K562 (cell line): ENCODE measurements at regions of chr18 and their contacts with region 1.

Region 1: GRCh38 chr18:11937874-11938478 is 29.9 kb upstream of the MPPE1 start:
- DNase-seq: peak; percentile 61 to 82 (median 64)
- ATAC-seq: peak; percentile 83
- H3K4me3 ChIP-seq: no peak overlapping the region
- H3K27ac ChIP-seq: no peak overlapping the region
- H3K4me1 ChIP-seq: no peaks in the 10 kb centered on the region
- H3K27me3 ChIP-seq: peaks cover 0 to 6% of the 10 kb centered on the region in 2 experiments; a peak in 2 of 5 replicates
- CTCF ChIP-seq: peak; percentile 77 to 89 (median 80)
- EP300 ChIP-seq: no peak
- POLR2A ChIP-seq: no peak
- RAD21 ChIP-seq: peak; percentile 81 to 96

Region 2: GRCh38 chr18:11995445-11996189 is 57.6 kb after region 1 on chr18:
- CTCF ChIA-PET with region 1: interaction called, 30 read pairs
- POLR2A ChIA-PET with region 1: interaction called, 4 read pairs
- in situ Hi-C with region 1: loop called (anchors 5 kb)
- intact Hi-C with region 1: loop called (anchors 1 kb)
- DNase-seq: peak; percentile 65 to 83 (median 72)
- ATAC-seq: peak; percentile 95
- H3K4me3 ChIP-seq: no peak overlapping the region
- H3K27ac ChIP-seq: no peak overlapping the region
- H3K4me1 ChIP-seq: peaks cover 0 to 4% of the 10 kb centered on the region in 2 experiments; a peak in 2 of 5 replicates
- H3K27me3 ChIP-seq: peaks cover 0 to 4% of the 10 kb centered on the region in 2 experiments; a peak in 1 of 5 replicates
- CTCF ChIP-seq: peak; percentile 94 to 96 (median 96)
- EP300 ChIP-seq: no peak
- POLR2A ChIP-seq: no peak
- RAD21 ChIP-seq: peak; percentile 73 to 97